Right ventricle myocardium inferior (tissue), 1 donor: ENCODE measurements at regions of chr15 and their contacts with region 1.

Region 1: GRCh38 chr15:43824302-43825246 is at the start of gene MFAP1:
- DNase-seq: peak; percentile 97
- ATAC-seq: peak; percentile 96
- total RNA-seq, gene MFAP1: 18.9 TPM

Region 2: GRCh38 chr15:43749690-43750345 is 74.8 kb before region 1 on chr15:
- intact Hi-C with region 1: loop called (anchors 10 kb)
- DNase-seq: no peak
- ATAC-seq: no peak

Region 3: GRCh38 chr15:43776718-43777583 is 47.6 kb before region 1 on chr15 and contains the start of gene ELL3:
- intact Hi-C with region 1: loop called (anchors 10 kb)
- DNase-seq: peak; percentile 91
- ATAC-seq: peak; percentile 88
- total RNA-seq, gene ELL3: 1.5 TPM

Region 4: DNA sequence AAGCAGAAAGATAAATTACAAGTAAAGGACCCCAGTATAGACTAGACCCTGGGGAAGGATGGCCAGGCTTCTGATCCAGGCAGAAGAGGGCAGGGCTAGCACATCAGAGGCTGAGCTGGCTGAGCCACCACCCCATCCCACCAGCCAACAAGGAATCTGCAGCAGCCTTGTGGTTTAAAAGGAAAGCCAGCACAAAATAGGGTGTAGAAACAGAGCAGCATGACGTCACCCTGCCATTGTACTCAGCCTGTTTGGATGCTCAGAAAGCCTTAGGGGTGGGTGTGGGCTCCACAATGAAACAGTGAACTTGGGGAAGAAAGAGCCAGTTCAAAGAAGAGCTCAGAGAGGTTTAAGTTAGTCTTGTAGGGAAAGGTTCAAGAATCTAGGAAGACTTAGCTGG is 1333.4 kb after region 1 on chr15:
- intact Hi-C with region 1: no loop called
- DNase-seq: peak; percentile 25
- ATAC-seq: no peak